Mammary epithelial cell (primary cell): ENCODE measurements at regions of chr17 and their contacts with region 1.

Region 1: GRCh38 chr17:47802341-47803022 is 19.1 kb downstream of the OSBPL7 start:
- DNase-seq: peak; percentile 52
- H3K4me3 ChIP-seq: no peak overlapping the region
- H3K27ac ChIP-seq: no peak overlapping the region
- H3K4me1 ChIP-seq: no peaks in the 10 kb centered on the region
- H3K27me3 ChIP-seq: no peaks in the 10 kb centered on the region
- CTCF ChIP-seq: peak; percentile 63 to 77

Region 2: GRCh38 chr17:47363171-47363570 is 439.3 kb before region 1 on chr17:
- CTCF ChIA-PET with region 1: no interaction called
- dilution Hi-C with region 1: no loop called
- in situ Hi-C with region 1: no loop called
- intact Hi-C with region 1: loop called (anchors 5 kb)
- DNase-seq: peak; percentile 12
- H3K4me3 ChIP-seq: no peak overlapping the region
- H3K27ac ChIP-seq: no peak overlapping the region
- H3K4me1 ChIP-seq: no peaks in the 10 kb centered on the region
- H3K27me3 ChIP-seq: peaks cover 2% of the 10 kb centered on the region
- CTCF ChIP-seq: no peak

Region 3: DNA sequence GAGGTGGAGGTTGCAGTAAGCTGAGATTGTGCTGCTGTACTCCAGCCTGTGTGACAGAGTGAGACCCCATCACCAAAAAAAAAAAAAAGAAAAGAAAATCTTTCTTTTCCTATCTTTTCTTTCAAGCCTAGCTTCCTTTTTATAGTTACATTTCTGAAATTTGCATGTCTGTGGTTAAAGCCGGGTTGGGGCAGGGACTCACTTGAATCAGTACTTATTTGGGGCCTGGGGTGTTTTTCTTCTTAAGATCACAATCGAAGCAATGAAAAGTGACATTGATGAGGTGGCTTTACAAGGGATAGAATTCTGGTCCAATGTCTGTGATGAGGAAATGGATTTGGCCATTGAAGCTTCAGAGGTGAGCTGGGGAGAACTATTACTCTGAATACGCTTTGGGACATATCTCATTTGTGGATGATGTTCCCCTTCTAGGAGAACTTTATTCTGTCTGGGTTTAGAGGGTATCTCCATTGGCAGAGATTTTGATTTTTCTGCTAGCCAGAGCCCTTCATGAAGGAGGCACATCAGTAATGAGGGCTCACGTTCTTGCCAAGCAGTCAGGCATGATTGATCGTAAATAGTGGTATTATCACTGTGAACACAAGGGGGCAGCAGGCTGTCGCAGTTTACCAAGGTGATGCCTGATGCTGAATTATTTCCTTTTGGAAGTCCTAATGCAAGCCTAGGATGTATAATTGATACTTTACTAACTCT is 138.4 kb before region 1 on chr17:
- CTCF ChIA-PET with region 1: no interaction called
- dilution Hi-C with region 1: no loop called
- in situ Hi-C with region 1: no loop called
- intact Hi-C with region 1: loop called (anchors 1 kb)
- DNase-seq: peak; percentile 34
- H3K4me3 ChIP-seq: no peak overlapping the region
- H3K27ac ChIP-seq: no peak overlapping the region
- H3K4me1 ChIP-seq: no peaks in the 10 kb centered on the region
- H3K27me3 ChIP-seq: no peaks in the 10 kb centered on the region
- CTCF ChIP-seq: peak; percentile 71 to 80

Region 4: GRCh38 chr17:47698749-47699535 is 103.5 kb before region 1 on chr17:
- CTCF ChIA-PET with region 1: no interaction called
- dilution Hi-C with region 1: no loop called
- in situ Hi-C with region 1: loop called (anchors 10 kb)
- intact Hi-C with region 1: loop called (anchors 1 kb)
- DNase-seq: peak; percentile 33
- H3K4me3 ChIP-seq: no peak overlapping the region
- H3K27ac ChIP-seq: no peak overlapping the region
- H3K4me1 ChIP-seq: peaks cover 9% of the 10 kb centered on the region
- H3K27me3 ChIP-seq: no peaks in the 10 kb centered on the region
- CTCF ChIP-seq: peak; percentile 62 to 88

Region 5: GRCh38 chr17:47776330-47777197 is 25.9 kb before region 1 on chr17:
- CTCF ChIA-PET with region 1: no interaction called
- dilution Hi-C with region 1: no loop called
- in situ Hi-C with region 1: no loop called
- intact Hi-C with region 1: loop called (anchors 1 kb)
- DNase-seq: peak; percentile 29
- H3K4me3 ChIP-seq: no peak overlapping the region
- H3K27ac ChIP-seq: no peak overlapping the region
- H3K4me1 ChIP-seq: no peaks in the 10 kb centered on the region
- H3K27me3 ChIP-seq: peaks cover 17% of the 10 kb centered on the region
- CTCF ChIP-seq: peak; percentile 61 to 75

Region 6: GRCh38 chr17:47789611-47790561 is 12.6 kb before region 1 on chr17:
- CTCF ChIA-PET with region 1: interaction called, 11 read pairs
- dilution Hi-C with region 1: no loop called
- in situ Hi-C with region 1: no loop called
- intact Hi-C with region 1: no loop called
- DNase-seq: peak; percentile 50
- H3K4me3 ChIP-seq: peak overlapping the region in 2 of 3 experiments; percentile 32 to 34
- H3K27ac ChIP-seq: no peak overlapping the region
- H3K4me1 ChIP-seq: peaks cover 7% of the 10 kb centered on the region
- H3K27me3 ChIP-seq: peaks cover 22% of the 10 kb centered on the region
- CTCF ChIP-seq: peak; percentile 17 to 50

Region 7: GRCh38 chr17:47831003-47831933 is 28.8 kb after region 1 on chr17 and contains the starts of genes LRRC46 and MRPL10:
- CTCF ChIA-PET with region 1: no interaction called
- dilution Hi-C with region 1: no loop called
- in situ Hi-C with region 1: no loop called
- intact Hi-C with region 1: loop called (anchors 2 kb)
- DNase-seq: peak; percentile 86
- H3K4me3 ChIP-seq: peak within 1 kb of the TSS; percentile 66 to 98 (median 77)
- H3K27ac ChIP-seq: peak within 1 kb of the TSS; percentile 65
- H3K4me1 ChIP-seq: peaks cover 20% of the 10 kb centered on the region
- H3K27me3 ChIP-seq: no peaks in the 10 kb centered on the region
- CTCF ChIP-seq: peak; percentile 51 to 53
- total RNA-seq, gene LRRC46: 0.54 TPM in 1 of 2 donors, not detected in the other
- total RNA-seq, gene MRPL10: 18.2 to 39.4 TPM

Region 8: GRCh38 chr17:47949136-47949759 is 146.8 kb after region 1 on chr17:
- CTCF ChIA-PET with region 1: no interaction called
- dilution Hi-C with region 1: no loop called
- in situ Hi-C with region 1: no loop called
- intact Hi-C with region 1: no loop called
- DNase-seq: peak; percentile 86
- H3K4me3 ChIP-seq: peak overlapping the region in 1 of 3 experiments; percentile 8
- H3K27ac ChIP-seq: peak overlapping the region; percentile 85
- H3K4me1 ChIP-seq: peaks cover 32% of the 10 kb centered on the region
- H3K27me3 ChIP-seq: no peaks in the 10 kb centered on the region
- CTCF ChIP-seq: peak; percentile 83 to 93